ENCODE measurements at regions of chr11 and their contacts with region 1.

Region 1: DNA sequence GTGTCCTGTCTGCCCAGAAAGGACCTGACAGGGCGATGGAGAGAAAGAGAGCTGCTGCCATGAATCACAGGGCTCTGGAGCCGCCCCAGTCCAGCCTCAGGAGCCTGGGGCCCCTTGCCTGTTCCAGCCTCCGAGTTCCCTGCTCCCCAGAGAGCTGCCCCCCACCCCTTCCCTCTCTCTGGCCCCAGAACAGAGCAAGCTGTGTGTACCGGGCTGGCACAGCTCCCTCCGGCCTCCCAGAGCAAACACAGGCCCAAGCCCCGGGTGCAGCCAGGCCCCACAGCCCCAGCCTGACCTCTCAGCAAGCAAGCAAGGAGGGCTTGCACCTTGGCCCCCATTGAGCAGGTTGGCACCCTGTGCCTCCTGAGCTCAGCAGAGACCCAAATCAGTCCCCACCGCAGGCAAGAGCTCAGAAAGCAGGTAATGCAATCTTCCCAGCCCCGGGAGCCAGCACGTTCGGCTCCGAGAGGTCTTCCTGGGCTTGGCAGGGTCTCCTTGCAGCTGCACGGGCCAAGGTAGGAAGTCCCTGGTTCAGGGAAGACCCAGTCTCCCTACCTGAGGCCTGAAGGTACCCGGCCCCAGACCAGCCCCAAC is 1.4 kb downstream of the PACSIN3 start:
- DNase-seq: peak; percentile 79
- ATAC-seq: peak; percentile 41

Region 2: DNA sequence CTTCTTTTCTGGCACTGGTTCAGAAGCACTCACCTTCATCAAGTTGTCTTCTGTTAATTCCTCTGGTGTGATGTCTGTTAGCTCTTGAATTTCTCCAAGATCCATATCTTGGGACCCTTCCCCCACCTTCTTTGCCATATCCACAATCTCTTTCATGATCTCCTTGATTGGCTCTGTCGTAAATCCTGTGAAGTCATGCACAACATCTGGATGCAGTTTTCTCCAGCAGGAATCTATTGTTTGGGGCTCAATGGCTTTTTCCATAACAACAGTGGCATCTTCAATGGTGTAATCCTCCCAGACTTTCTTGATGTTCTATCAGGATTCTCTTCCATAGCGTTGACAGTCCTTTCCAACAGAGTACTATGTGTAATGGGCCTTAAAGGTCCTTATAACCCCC is 151.4 kb before region 1 on chr11:
- intact Hi-C with region 1: no loop called
- DNase-seq: no peak
- ATAC-seq: no peak

Region 3: GRCh38 chr11:47225552-47226400 is 41.0 kb after region 1 on chr11:
- intact Hi-C with region 1: no loop called
- DNase-seq: no peak
- ATAC-seq: no peak

Region 4: DNA sequence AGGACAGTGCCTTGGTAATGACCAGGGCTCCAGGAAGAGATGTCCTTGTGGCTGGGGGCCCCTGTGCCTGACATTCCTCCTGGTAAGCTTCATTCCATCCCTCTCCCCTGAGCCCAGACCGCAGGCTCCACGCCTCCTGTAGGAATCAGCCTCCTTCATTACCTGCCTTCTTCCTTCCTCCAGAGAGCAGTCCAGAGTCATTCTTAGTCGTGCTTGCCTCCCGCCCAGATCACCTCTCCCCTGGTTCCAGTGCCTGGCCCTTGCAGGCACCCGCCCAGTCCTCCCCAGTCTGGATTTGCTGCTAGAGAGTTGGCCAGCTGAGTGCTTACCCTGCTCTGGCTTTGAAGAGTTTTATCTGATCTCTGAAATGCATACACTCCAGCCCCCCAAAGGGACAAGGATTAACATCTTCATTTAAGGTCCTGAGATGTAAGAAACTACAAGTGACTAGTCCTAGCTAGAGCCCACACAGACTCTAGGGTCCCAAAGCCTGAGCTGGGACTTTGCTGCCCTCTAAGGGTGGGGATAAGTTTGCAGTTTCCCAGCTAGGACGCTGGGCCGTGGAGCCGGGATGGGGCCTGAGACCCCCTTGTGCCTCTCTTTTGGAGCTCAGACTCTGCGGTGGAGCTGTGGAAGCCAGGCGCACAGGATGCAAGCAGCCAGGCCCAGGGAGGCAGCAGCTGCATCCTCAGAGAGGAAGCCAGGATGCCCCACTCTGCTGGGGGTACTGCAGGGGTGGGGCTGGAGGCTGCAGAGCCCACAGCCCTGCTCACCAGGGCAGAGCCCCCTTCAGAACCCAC is 74.6 kb after region 1 on chr11:
- intact Hi-C with region 1: loop called (anchors 5 kb)
- DNase-seq: no peak
- ATAC-seq: peak; percentile 23

Measured in sciatic nerve (tissue), 2 donors.